ENCODE measurements at regions of chr2 and their contacts with region 1.

Region 1: DNA sequence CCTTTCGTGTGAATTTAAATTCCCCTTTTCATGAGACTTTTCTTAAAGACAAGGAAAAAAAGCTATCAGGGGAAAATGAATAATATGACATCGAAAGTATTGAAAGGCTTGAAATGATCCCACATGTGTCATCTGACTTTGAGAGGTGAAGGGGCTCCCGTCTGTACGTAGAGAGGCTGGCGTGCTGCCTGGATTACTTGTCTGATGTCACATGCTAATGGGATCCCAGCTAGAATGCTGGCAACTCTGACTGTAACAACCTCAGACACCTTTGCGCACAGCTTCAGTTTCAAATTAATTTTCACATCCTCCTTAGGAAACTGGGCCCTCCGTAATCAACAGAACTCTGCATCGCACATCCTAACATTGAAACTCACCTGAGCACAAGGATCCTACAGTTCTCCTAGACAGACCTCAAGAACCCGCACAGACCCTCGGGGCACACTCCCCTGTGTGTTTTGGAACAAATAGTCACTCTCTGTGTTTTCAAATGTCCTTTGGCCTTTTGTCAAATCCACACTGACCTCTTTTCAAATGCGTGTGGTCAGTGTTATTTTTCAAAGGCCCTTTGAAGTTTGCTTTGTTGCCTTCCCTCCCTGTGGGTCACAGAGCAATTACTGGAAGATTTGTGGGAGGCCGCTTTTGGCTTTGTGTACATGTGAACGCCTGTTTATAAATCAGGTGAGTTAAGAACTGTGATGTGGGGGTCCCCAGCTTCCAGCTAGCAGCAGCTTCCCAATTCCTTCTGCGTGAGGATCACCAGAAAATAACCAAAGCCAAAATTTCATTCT is 65.9 kb downstream of the IL1R2 start:
- DNase-seq: peak; percentile 65
- ATAC-seq: peak; percentile 92
- H3K4me3 ChIP-seq: no peak overlapping the region
- H3K27ac ChIP-seq: no peak overlapping the region
- H3K4me1 ChIP-seq: no peaks in the 10 kb centered on the region
- H3K27me3 ChIP-seq: no peaks in the 10 kb centered on the region; a peak in 1 of 4 replicates
- CTCF ChIP-seq: no peak
- EP300 ChIP-seq: peak; percentile 66 to 91; a peak in 3 of 4 replicates
- POLR2A ChIP-seq: no peak
- RAD21 ChIP-seq: no peak

Region 2: GRCh38 chr2:102027036-102027980 is 30.4 kb before region 1 on chr2:
- CTCF ChIA-PET with region 1: interaction called, 28 read pairs
- POLR2A ChIA-PET with region 1: interaction called, 16 read pairs
- RAD21 ChIA-PET with region 1: interaction called, 77 read pairs
- SMC1A ChIA-PET with region 1: interaction called, 97 read pairs
- in situ Hi-C with region 1: no loop called
- intact Hi-C with region 1: loop called (anchors 1 kb)
- DNase-seq: no peak
- ATAC-seq: no peak
- H3K4me3 ChIP-seq: no peak overlapping the region
- H3K27ac ChIP-seq: no peak overlapping the region
- H3K4me1 ChIP-seq: peaks cover 7% of the 10 kb centered on the region
- H3K27me3 ChIP-seq: no peaks in the 10 kb centered on the region
- CTCF ChIP-seq: no peak
- EP300 ChIP-seq: no peak
- POLR2A ChIP-seq: no peak
- RAD21 ChIP-seq: no peak

Region 3: DNA sequence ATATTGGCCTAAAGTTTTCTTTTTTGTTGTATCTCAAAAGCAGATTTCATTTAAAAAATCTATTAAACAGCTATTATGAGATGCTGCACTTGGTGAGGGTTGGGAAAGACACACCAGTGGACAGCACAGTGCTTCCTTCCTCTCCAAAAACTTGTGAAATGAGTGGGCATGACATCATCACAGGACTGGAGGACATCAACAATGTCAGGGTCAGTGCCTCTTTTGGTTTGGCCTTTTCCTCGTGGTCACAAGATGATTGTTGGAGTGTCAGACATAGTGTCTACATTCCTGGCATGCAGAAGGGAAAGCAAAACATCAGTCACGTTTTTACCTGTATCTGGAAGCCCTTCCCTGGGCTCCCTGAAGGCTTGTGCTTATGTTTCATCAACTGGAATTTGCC is 16.3 kb before region 1 on chr2:
- CTCF ChIA-PET with region 1: interaction called, 5 read pairs
- POLR2A ChIA-PET with region 1: interaction called, 4 read pairs
- RAD21 ChIA-PET with region 1: interaction called, 11 read pairs
- SMC1A ChIA-PET with region 1: interaction called, 68 read pairs
- in situ Hi-C with region 1: no loop called
- intact Hi-C with region 1: no loop called
- DNase-seq: no peak
- ATAC-seq: no peak; the same call in 2 of the 3 replicates
- H3K4me3 ChIP-seq: no peak overlapping the region
- H3K27ac ChIP-seq: no peak overlapping the region
- H3K4me1 ChIP-seq: no peaks in the 10 kb centered on the region
- H3K27me3 ChIP-seq: no peaks in the 10 kb centered on the region
- CTCF ChIP-seq: no peak
- EP300 ChIP-seq: no peak
- POLR2A ChIP-seq: no peak
- RAD21 ChIP-seq: no peak

Region 4: GRCh38 chr2:102103992-102104871 is 46.5 kb after region 1 on chr2:
- CTCF ChIA-PET with region 1: interaction called, 8 read pairs
- POLR2A ChIA-PET with region 1: interaction called, 5 read pairs
- RAD21 ChIA-PET with region 1: interaction called, 21 read pairs
- SMC1A ChIA-PET with region 1: interaction called, 12 read pairs
- in situ Hi-C with region 1: no loop called
- intact Hi-C with region 1: loop called (anchors 2 kb)
- DNase-seq: peak; percentile 67
- ATAC-seq: peak; percentile 79
- H3K4me3 ChIP-seq: peak overlapping the region; percentile 53
- H3K27ac ChIP-seq: peak overlapping the region; percentile 37; the same call in 1 of the 2 replicates
- H3K4me1 ChIP-seq: no peaks in the 10 kb centered on the region
- H3K27me3 ChIP-seq: no peaks in the 10 kb centered on the region
- CTCF ChIP-seq: no peak
- EP300 ChIP-seq: peak in 1 of 2 experiments; percentile 54; a peak in 2 of 4 replicates
- POLR2A ChIP-seq: no peak
- RAD21 ChIP-seq: no peak